AG04450 (cell line): ENCODE measurements at regions of chr7 and their contacts with region 1.

Region 1: DNA sequence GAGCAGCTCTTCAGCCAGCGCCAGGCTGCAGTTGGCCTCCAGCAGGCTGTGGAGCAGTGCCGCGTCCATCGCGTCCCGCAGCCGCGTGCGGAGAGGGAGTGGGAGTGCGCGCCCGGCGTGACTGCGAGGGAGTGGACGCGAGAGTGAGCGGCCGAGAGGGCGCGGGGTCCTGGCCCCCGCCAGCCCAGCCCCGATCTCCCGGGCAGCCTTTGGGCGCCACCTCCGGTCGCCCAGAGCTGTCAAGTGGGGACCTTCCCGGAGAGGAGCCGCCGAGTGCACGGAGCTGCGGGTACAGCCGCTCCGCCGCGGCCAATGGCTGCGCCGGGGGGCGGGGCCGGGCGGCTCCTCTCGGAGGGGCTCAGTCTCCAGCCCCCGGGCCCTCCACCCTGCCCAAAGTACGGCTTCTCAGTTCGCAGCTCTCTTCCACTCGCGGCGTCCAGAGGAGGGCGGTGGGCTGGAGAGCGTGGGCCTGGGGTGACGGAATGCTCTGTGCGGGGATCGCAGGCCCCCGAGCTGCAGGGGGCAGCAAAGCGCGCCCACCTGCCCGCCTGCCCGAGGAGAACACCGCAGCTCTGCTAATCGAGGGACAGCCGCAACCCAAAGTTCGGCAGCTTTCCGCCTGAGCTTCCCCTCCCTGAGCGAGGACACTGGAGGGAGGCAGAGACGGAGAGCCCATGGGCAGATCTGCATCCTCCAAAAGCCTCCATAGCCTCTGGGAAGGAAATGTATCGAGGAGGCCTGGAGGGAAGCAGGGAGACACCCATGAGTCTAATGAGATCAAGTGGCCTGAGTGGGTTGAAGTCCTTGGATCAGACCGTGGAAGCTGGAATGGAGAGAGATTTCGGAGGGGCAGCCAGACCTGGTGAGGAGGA is at the start of gene CRHR2:
- DNase-seq: no peak
- H3K4me3 ChIP-seq: peak within 1 kb of the TSS; percentile 10; the same call in 1 of the 2 replicates
- H3K27ac ChIP-seq: no peak within 1 kb of the TSS
- H3K27me3 ChIP-seq: peaks cover 78% of the 10 kb centered on the region
- CTCF ChIP-seq: peak; percentile 30; the same call in 1 of the 2 replicates
- polyA plus RNA-seq, gene CRHR2: not detected in 2 replicates

Region 2: DNA sequence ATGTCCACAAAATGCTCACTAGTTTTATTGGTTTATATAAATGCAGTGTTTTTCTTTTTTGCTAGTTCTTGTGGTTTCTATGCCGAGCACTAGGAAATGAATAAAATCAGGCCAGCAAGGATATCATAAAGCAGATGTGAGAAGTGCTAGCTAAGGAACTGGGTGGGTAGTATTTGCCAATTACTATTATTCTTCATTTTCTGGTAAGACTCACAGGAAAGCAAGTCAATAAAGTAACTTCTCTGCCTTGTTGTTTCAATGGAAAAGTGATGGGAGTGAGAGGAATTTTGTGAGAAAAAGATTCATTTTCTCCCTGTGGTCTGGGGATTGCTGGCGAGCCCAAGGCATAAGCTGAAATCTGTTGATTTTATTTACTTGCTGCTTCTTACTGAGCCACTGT is 1673.9 kb before region 1 on chr7:
- CTCF ChIA-PET with region 1: no interaction called
- POLR2A ChIA-PET with region 1: interaction called, 10 read pairs
- DNase-seq: no peak
- H3K4me3 ChIP-seq: no peak overlapping the region
- H3K27ac ChIP-seq: no peak overlapping the region
- H3K27me3 ChIP-seq: no peaks in the 10 kb centered on the region
- CTCF ChIP-seq: no peak